ENCODE measurements at regions of chr2 and their contacts with region 1.

Region 1: GRCh38 chr2:178112202-178113152 is at the start of gene RBM45:
- DNase-seq: peak; percentile 86
- H3K4me3 Mint-ChIP-seq: peak within 1 kb of the TSS; percentile 92
- H3K27ac Mint-ChIP-seq: peak within 1 kb of the TSS; percentile 59
- H3K4me1 Mint-ChIP-seq: peaks cover 36% of the 10 kb centered on the region
- H3K27me3 Mint-ChIP-seq: no peaks in the 10 kb centered on the region
- total RNA-seq, gene RBM45: 5.7 to 5.8 TPM

Region 2: GRCh38 chr2:177983183-177983788 is 129.2 kb before region 1 on chr2:
- CTCF ChIA-PET with region 1: interaction called, 3 read pairs
- intact Hi-C with region 1: loop called (anchors 5 kb)
- DNase-seq: peak; percentile 39
- H3K4me3 Mint-ChIP-seq: no peak overlapping the region
- H3K27ac Mint-ChIP-seq: no peak overlapping the region
- H3K4me1 Mint-ChIP-seq: no peaks in the 10 kb centered on the region
- H3K27me3 Mint-ChIP-seq: peaks cover 5% of the 10 kb centered on the region

Region 3: GRCh38 chr2:178280244-178280852 is 167.9 kb after region 1 on chr2:
- CTCF ChIA-PET with region 1: interaction called, 19 read pairs
- intact Hi-C with region 1: loop called (anchors 1 kb)
- DNase-seq: peak; percentile 64
- H3K4me3 Mint-ChIP-seq: no peak overlapping the region
- H3K27ac Mint-ChIP-seq: no peak overlapping the region
- H3K4me1 Mint-ChIP-seq: no peaks in the 10 kb centered on the region
- H3K27me3 Mint-ChIP-seq: peaks cover 18% of the 10 kb centered on the region

Region 4: DNA sequence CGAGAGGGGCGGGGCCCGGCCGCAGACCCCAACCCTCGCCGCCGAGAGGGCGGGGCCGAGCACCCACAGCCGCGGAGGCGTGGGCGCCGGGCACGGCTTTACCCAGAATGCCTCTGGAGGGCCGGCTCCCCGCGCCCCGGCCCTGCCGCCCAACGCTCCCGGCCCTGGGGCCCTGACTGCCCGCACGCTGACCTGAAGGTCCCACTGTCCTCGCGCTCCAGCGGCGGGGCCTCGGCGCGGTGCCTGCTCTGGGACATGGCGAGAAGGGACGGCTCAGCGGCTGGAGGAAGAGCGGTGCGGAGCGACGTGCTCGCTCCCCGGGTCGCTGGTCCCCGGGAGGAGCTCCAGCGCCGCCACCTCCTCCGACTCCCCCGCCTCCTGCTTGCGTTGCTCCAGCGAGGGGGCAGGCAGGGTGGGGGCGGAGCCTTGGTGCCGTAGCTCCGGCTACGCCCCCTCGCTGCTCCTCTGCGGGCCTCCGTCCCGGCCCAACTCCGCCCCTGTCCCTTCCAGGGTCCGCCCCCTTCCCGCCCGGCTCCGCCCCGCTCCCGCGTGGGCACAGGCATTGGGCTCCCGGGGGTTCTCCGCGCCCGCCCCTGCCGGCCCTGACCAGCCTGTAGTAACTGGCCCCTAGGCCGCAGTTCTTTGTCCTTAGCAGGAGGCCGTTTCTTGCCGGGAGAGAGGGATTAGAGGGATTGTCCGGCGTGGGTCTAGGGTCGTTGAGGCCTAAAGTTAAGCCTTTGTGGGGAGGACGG is 338.5 kb after region 1 on chr2 and contains the starts of genes PJVK and PRKRA:
- CTCF ChIA-PET with region 1: interaction called, 4 read pairs
- intact Hi-C with region 1: loop called (anchors 1 kb)
- DNase-seq: peak; percentile 96
- H3K4me3 Mint-ChIP-seq: peak within 1 kb of the TSS; percentile 91
- H3K27ac Mint-ChIP-seq: peak within 1 kb of the TSS; percentile 97
- H3K4me1 Mint-ChIP-seq: peaks cover 27% of the 10 kb centered on the region
- H3K27me3 Mint-ChIP-seq: no peaks in the 10 kb centered on the region
- total RNA-seq, gene PJVK: 2.0 to 2.4 TPM
- total RNA-seq, gene PRKRA: 78.2 to 82.9 TPM

Region 5: DNA sequence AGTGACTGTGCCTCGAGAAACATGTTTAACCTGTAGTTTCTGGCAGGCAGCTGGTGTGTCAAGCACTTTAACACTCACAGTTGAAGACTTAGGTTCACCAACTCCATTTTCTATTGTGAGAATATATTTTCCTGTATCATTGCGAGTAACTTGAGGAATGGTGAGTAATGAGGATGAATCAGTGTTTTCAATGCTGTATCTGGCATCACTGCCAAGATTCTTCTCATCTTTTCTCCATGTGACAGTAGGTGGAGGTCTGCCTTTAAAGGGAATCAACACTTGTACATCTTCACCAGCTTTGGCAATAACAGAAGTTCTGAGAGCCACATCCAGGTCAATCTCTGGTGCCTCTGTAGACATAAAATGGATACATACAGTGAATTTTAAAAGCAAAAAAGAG is 440.6 kb after region 1 on chr2:
- CTCF ChIA-PET with region 1: no interaction called
- intact Hi-C with region 1: no loop called
- DNase-seq: no peak
- H3K4me3 Mint-ChIP-seq: no peak overlapping the region
- H3K27ac Mint-ChIP-seq: no peak overlapping the region
- H3K4me1 Mint-ChIP-seq: peaks cover 5% of the 10 kb centered on the region
- H3K27me3 Mint-ChIP-seq: no peaks in the 10 kb centered on the region

Region 6: DNA sequence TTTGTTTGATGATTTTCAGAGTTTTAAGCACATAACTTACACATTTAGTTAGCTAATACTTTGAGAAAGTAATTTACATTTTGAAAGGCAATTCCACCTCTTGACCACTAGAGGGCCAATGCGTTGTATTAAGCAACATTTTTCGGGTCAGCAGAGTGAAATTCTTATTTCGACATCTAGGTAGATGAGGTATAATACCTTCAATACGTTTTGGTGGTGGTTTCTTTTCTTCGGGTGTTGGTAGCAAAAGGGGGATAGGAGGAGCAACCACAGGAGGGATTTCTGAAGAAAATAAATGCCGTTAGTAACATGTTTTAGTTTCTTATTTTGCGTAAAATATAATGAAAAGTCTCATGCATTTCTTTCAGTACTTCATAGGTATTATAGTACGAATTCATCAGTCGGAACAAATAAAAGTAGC is 588.5 kb after region 1 on chr2:
- CTCF ChIA-PET with region 1: no interaction called
- intact Hi-C with region 1: loop called (anchors 10 kb)
- DNase-seq: no peak
- H3K4me3 Mint-ChIP-seq: no peak overlapping the region
- H3K27ac Mint-ChIP-seq: no peak overlapping the region
- H3K4me1 Mint-ChIP-seq: peaks cover 2% of the 10 kb centered on the region
- H3K27me3 Mint-ChIP-seq: no peaks in the 10 kb centered on the region

Region 7: GRCh38 chr2:179031731-179032408 is 919.4 kb after region 1 on chr2:
- CTCF ChIA-PET with region 1: no interaction called
- intact Hi-C with region 1: loop called (anchors 10 kb)
- DNase-seq: peak; percentile 71
- H3K4me3 Mint-ChIP-seq: peak overlapping the region; percentile 61
- H3K27ac Mint-ChIP-seq: peak overlapping the region; percentile 87
- H3K4me1 Mint-ChIP-seq: peaks cover 32% of the 10 kb centered on the region
- H3K27me3 Mint-ChIP-seq: no peaks in the 10 kb centered on the region